CD4-positive, alpha-beta T cell (primary cell): ENCODE measurements at regions of chr1 and their contacts with region 1.

Region 1: DNA sequence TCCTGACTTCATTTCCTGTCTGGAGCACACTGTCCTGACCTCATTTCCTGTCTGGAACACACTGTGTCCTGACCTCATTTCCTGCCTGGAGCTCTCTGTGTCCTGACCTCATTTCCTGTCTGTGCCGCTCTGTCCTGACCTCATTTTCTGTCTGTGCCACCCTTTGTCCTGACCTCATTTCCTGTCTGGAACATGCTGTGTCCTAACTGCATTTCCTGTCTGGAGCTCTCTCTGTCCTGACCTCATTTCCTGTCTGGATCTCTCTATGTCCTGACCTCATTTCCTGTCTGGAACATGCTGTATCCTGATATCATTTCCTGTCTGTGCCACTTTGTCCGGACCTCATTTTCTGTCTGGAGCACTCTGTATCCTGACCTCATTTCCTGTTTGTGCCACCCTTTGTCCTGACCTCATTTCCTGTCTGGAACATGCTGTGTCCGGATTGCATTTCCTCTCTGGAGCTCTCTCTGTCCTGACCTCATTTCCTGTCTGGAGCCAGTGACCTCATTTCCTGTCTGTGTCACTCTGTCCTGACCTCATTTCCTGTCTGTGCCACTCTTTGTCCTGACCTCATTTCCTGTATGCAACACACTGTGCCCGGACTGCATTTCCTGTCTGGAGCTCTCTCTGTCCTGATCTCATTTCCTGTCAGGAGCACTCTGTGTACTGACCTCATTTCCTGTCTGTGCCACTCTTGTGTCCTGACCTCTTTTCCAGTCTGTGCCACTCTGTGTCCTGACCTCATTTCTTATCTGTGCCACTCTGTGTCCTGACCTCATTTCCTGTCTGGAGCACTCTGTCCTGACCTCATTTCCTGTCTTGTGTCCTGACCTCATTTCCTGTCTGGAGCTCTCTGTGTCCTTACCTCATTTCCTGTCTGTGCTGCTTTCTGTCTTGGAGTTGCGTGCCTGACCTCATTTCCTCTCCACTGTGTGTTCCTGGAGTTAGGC is 27.6 kb downstream of the SKI start:
- DNase-seq: peak; percentile 40 to 97 (median 66)
- ATAC-seq: peak; percentile 67
- H3K4me3 ChIP-seq: no peak overlapping the region
- H3K4me3 Mint-ChIP-seq: no peak overlapping the region
- H3K27ac ChIP-seq: peak overlapping the region; percentile 99 to 100
- H3K27ac Mint-ChIP-seq: no peak overlapping the region
- H3K4me1 ChIP-seq: peaks cover 97% of the 10 kb centered on the region
- H3K4me1 Mint-ChIP-seq: peaks cover 52% of the 10 kb centered on the region
- H3K27me3 ChIP-seq: no peaks in the 10 kb centered on the region
- H3K27me3 Mint-ChIP-seq: no peaks in the 10 kb centered on the region
- CTCF ChIP-seq: no peak

Region 2: DNA sequence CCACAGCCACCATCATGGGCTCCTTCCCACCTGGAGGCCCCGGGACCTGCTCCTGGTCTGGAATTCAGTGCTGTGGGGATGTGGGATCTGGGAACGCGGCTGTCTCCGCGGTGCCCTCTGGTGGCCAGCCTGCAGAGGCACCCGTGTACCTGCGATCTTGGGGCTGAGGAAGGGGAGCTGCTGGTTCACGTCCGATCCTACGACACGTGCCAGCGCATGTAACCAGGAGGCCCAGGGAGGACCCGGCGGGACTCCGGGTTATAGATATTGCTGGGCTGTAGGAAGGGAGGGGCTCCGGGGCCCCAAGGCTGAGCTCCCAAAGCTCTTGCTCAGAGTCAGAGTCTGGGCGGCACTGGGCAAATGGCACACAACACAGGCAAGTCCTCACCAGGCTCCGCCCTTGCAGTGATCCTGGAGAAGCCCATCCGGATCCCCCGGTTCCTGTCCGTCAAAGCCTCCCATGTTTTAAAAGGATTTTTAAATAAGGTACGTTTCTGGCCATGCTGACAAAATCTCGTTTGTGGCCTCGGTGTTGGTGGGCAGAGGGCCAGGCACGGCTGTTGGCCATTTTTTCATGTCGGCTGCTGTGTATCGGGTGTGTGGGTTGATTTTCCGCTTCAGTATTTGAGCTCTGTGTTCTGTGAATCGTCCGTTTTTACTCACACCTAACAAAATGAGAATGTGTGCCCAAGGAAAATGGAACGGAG is 81.2 kb before region 1 on chr1:
- CTCF ChIA-PET with region 1: no interaction called
- POLR2A ChIA-PET with region 1: no interaction called
- intact Hi-C with region 1: no loop called
- DNase-seq: peak in 8 of 14 experiments; percentile 19 to 68 (median 32)
- ATAC-seq: peak; percentile 70
- H3K4me3 ChIP-seq: peak overlapping the region; percentile 28
- H3K4me3 Mint-ChIP-seq: peak overlapping the region; percentile 60
- H3K27ac ChIP-seq: no peak overlapping the region
- H3K27ac Mint-ChIP-seq: no peak overlapping the region
- H3K4me1 ChIP-seq: peaks cover 10% of the 10 kb centered on the region
- H3K4me1 Mint-ChIP-seq: no peaks in the 10 kb centered on the region
- H3K27me3 ChIP-seq: no peaks in the 10 kb centered on the region
- H3K27me3 Mint-ChIP-seq: no peaks in the 10 kb centered on the region
- CTCF ChIP-seq: peak; percentile 79

Region 3: DNA sequence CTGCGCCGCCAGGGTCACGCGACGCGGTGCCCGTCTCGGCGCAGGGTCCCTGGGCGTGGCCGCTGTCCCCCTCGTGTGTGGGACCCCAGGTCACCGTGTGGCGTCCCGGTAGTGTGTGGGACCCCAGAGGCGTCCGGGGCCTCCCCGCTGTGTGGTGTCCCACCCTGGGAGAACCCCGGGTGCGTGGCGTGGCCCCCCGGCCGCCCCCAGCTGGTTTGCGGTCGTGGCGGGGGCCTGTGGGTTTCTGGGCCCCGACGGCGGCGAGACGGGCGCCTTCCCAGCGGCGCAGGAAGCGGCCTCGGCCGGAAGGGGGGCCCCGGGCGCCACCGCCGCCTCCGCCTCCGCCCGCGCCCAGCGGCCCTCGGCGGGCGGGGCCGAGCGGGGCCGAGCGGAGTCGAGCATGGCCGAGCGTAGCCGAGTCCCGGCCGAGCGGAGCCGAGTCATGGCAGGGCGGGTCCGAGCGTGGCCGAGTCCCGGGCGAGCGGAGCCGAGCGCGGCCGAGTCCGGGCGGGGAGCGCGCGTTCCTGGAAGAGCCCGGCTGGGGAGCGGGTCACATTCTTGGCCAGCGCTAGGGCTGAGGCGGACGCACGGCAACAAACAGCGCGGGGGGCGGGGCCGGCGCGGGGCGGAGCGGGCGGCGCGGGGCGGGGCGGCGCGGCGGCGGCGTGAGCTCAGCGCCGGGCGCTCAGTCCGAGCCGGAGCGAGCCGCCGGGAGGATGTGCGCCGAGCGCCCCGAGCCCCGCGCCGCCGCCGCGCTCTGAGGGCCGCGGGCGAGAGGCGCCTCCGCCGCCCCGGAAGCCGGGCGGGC is 28.1 kb before region 1 on chr1:
- CTCF ChIA-PET with region 1: interaction called, 3 read pairs
- POLR2A ChIA-PET with region 1: interaction called, 197 read pairs
- intact Hi-C with region 1: loop called in 1 of 2 experiments (anchors 2 kb)
- DNase-seq: peak; percentile 86 to 98 (median 94)
- ATAC-seq: peak; percentile 70
- H3K4me3 ChIP-seq: peak overlapping the region; percentile 26
- H3K4me3 Mint-ChIP-seq: peak overlapping the region; percentile 88
- H3K27ac ChIP-seq: peak overlapping the region in 1 of 2 donors; percentile 46
- H3K27ac Mint-ChIP-seq: peak overlapping the region; percentile 82
- H3K4me1 ChIP-seq: peaks cover 50% of the 10 kb centered on the region
- H3K4me1 Mint-ChIP-seq: peaks cover 23% of the 10 kb centered on the region
- H3K27me3 ChIP-seq: no peaks in the 10 kb centered on the region
- H3K27me3 Mint-ChIP-seq: peaks cover 16% of the 10 kb centered on the region
- CTCF ChIP-seq: no peak

Region 4: DNA sequence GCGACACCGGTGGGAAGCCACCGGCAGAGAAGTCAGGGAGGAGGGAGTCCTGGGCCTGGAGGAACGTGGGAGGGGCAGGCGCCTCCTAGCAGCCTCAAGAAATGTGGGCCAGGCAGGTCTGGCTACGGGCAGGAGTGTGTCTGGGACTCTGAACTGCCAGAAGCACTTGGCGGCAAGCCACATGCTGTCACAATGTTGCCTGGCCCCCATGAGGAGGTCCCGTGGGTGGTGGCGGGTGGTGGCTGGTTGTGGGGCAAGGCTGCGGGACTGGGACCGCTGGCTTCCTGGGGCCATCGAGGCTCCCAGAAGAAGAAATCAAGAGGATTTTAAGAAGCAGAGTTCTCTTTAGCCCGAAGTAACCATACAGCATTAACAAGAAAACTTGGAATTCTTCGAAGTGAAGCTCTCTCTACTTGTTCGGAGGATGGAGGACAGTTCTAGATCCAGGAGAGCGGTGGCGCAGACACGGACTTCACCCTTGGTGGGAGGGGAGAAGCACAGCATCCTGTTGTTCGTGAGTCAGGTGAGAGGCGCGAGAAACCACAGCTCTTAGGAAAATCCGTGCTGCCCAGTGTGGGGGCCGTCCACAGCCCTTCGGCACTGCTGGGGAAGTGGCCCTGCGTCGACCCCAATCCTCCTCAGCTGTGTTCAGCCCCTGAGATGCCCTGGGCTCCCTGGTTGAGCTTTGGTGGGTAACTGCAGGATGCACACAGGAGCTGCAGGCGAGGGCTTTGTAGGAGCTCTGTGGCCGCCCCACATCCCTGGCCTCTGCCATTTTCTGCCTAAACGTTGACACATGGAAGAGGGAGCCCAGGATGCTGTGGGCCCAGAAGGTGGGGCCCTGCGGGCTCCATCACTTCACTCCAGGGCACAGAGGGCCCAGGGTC is 15.2 kb before region 1 on chr1:
- CTCF ChIA-PET with region 1: no interaction called
- POLR2A ChIA-PET with region 1: interaction called, 197 read pairs
- intact Hi-C with region 1: loop called in 1 of 2 experiments (anchors 2 kb)
- DNase-seq: peak in 6 of 14 experiments; percentile 34 to 68 (median 50)
- ATAC-seq: peak; percentile 24
- H3K4me3 ChIP-seq: no peak overlapping the region
- H3K4me3 Mint-ChIP-seq: peak overlapping the region; percentile 84
- H3K27ac ChIP-seq: peak overlapping the region in 1 of 2 donors; percentile 48
- H3K27ac Mint-ChIP-seq: peak overlapping the region; percentile 88
- H3K4me1 ChIP-seq: peaks cover 92% of the 10 kb centered on the region
- H3K4me1 Mint-ChIP-seq: peaks cover 88% of the 10 kb centered on the region
- H3K27me3 ChIP-seq: no peaks in the 10 kb centered on the region
- H3K27me3 Mint-ChIP-seq: no peaks in the 10 kb centered on the region
- CTCF ChIP-seq: no peak

Region 5: GRCh38 chr1:2300851-2301606 is 45.3 kb after region 1 on chr1:
- CTCF ChIA-PET with region 1: no interaction called
- POLR2A ChIA-PET with region 1: interaction called, 64 read pairs
- intact Hi-C with region 1: loop called (anchors 1 kb)
- DNase-seq: peak; percentile 86 to 99 (median 93)
- ATAC-seq: peak; percentile 76
- H3K4me3 ChIP-seq: peak overlapping the region; percentile 61
- H3K4me3 Mint-ChIP-seq: peak overlapping the region; percentile 91
- H3K27ac ChIP-seq: peak overlapping the region; percentile 97 to 98
- H3K27ac Mint-ChIP-seq: peak overlapping the region; percentile 99
- H3K4me1 ChIP-seq: peaks cover 72% of the 10 kb centered on the region
- H3K4me1 Mint-ChIP-seq: peaks cover 49% of the 10 kb centered on the region
- H3K27me3 ChIP-seq: no peaks in the 10 kb centered on the region
- H3K27me3 Mint-ChIP-seq: no peaks in the 10 kb centered on the region
- CTCF ChIP-seq: no peak

Region 6: GRCh38 chr1:2381741-2382620 is 126.3 kb after region 1 on chr1:
- CTCF ChIA-PET with region 1: interaction called, 3 read pairs
- POLR2A ChIA-PET with region 1: no interaction called
- intact Hi-C with region 1: loop called in 1 of 2 experiments (anchors 5 kb)
- DNase-seq: peak; percentile 63 to 86 (median 74)
- ATAC-seq: peak; percentile 95
- H3K4me3 ChIP-seq: no peak overlapping the region
- H3K4me3 Mint-ChIP-seq: no peak overlapping the region
- H3K27ac ChIP-seq: no peak overlapping the region
- H3K27ac Mint-ChIP-seq: no peak overlapping the region
- H3K4me1 ChIP-seq: peaks cover 13% of the 10 kb centered on the region
- H3K4me1 Mint-ChIP-seq: no peaks in the 10 kb centered on the region
- H3K27me3 ChIP-seq: no peaks in the 10 kb centered on the region
- H3K27me3 Mint-ChIP-seq: no peaks in the 10 kb centered on the region
- CTCF ChIP-seq: peak; percentile 87

Region 7: DNA sequence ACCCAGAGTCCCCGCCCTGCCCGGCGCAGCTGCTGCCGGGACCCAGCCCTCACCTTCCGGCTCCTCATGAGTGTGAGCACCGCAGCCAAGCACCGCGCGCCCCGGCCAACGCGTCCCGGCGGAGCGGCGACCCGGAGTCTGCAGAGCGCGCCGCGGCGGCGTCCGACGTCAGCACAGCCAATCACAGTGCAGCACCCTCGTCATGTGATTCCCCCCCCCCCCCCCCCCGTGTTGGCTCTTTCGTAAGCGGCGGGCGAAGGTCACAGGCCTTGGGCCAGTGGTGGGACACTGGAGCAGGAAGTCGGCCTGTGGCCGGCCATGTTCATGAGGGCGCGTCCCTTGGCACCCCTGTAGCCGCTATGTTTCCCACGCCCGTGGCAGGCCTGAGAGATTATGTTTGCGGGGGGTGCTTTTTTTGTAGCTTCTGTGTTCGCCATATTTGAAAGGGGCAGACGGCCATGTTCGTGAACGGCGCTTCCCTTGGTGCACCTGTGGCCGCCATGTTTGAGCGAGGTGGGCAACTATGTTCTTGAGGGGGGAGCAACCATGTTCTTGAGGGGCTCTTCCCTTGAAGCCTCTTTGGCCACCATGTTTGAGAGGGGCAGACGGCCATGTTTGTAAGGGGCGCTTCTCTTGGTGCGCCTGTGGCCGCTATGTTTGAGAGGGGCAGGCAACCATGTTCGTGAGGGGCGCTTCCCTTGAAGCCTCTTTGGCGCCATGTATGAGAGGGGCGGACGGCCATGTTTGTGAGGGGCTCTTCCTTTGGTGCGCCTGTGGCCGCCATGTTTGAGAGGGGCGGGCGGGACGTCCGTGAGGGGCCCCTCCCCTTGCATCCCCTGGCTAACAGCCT is 1644.6 kb after region 1 on chr1 and contains the start of gene C1orf174:
- CTCF ChIA-PET with region 1: no interaction called
- POLR2A ChIA-PET with region 1: no interaction called
- intact Hi-C with region 1: loop called in 1 of 2 experiments (anchors 5 kb)
- DNase-seq: peak; percentile 87 to 99 (median 92)
- ATAC-seq: peak; percentile 83
- H3K4me3 ChIP-seq: peak within 1 kb of the TSS; percentile 85
- H3K4me3 Mint-ChIP-seq: peak within 1 kb of the TSS; percentile 93
- H3K27ac ChIP-seq: peak within 1 kb of the TSS; percentile 81 to 96
- H3K27ac Mint-ChIP-seq: peak within 1 kb of the TSS; percentile 90
- H3K4me1 ChIP-seq: peaks cover 47% of the 10 kb centered on the region
- H3K4me1 Mint-ChIP-seq: peaks cover 69% of the 10 kb centered on the region
- H3K27me3 ChIP-seq: no peaks in the 10 kb centered on the region
- H3K27me3 Mint-ChIP-seq: no peaks in the 10 kb centered on the region
- CTCF ChIP-seq: no peak
- total RNA-seq, gene C1orf174: 16.8 to 18.5 TPM